Vagina (tissue), 2 donors: ENCODE measurements at regions of chr15 and their contacts with region 1.

Region 1: GRCh38 chr15:64895285-64896065 is 16.2 kb upstream of the ANKDD1A start:
- DNase-seq: no peak
- H3K4me3 ChIP-seq: peak overlapping the region; percentile 27 to 40
- H3K27ac ChIP-seq: peak overlapping the region; percentile 88
- H3K4me1 ChIP-seq: peaks cover 50% of the 10 kb centered on the region
- H3K27me3 ChIP-seq: no peaks in the 10 kb centered on the region
- CTCF ChIP-seq: no peak
- POLR2A ChIP-seq: no peak

Region 2: GRCh38 chr15:64841258-64842095 is 54.0 kb before region 1 on chr15 and contains the start of gene PLEKHO2:
- intact Hi-C with region 1: loop called (anchors 2 kb)
- DNase-seq: peak in 1 of 2 donors; percentile 96
- H3K4me3 ChIP-seq: peak within 1 kb of the TSS; percentile 91 to 97
- H3K27ac ChIP-seq: peak within 1 kb of the TSS; percentile 98
- H3K4me1 ChIP-seq: peaks cover 45% of the 10 kb centered on the region
- H3K27me3 ChIP-seq: no peaks in the 10 kb centered on the region
- CTCF ChIP-seq: peak in 1 of 3 experiments; percentile 24
- POLR2A ChIP-seq: peak; percentile 36 to 89
- total RNA-seq, gene PLEKHO2: 34.9 TPM